Activated B cell treated with CpG ODN at 0.5 μM for 24 hours (primary cell): ENCODE measurements at regions of chr4 and their contacts with region 1.

Region 1: GRCh38 chr4:742742-743311 is 37.2 kb downstream of the PCGF3 start:
- DNase-seq: peak; percentile 73
- ATAC-seq: peak; percentile 87
- H3K4me3 Mint-ChIP-seq: no peak overlapping the region
- H3K27ac Mint-ChIP-seq: no peak overlapping the region
- H3K4me1 Mint-ChIP-seq: peaks cover 1% of the 10 kb centered on the region
- H3K27me3 Mint-ChIP-seq: no peaks in the 10 kb centered on the region
- CTCF ChIP-seq: peak; percentile 96

Region 2: DNA sequence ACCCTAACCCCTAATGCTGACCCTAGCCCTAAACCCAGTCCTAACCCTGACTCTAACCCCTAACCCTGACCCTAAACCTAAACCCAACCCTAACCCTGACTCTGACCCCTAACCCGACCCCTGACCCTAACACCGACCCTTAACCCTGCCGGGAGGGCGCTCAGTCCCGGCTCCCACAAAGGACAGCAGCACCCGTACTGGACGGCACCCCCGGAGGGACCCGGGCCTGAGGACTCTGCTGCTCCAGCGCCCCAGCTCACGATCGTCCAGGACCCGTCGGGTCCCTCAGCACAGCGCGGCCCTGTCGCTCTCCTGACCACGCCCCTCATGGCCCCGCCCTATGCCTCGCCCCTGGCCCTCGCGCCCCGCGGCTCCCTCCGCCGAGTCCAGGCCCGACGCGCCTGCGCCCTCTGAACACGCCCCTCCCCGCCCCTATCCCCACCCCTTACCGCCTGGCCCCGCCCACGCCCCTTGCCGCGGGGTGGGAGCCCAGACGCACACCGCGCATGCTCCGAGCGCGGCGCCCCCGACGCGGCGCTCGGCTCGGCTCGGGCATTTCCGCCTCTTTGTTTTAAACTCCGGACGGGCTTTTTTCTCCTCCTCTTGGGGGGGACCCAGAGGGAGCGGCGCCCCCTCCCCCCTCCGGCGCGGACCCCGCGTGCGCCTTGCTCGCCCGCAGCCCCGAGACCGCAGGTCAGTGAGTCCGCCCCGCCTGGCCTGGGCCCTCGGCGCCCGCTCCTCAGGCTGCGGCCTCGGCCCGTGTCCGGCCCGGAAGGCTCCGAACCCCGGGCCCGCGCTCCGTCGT is 37.3 kb before region 1 on chr4 and contains the start of gene PCGF3:
- CTCF ChIA-PET with region 1: no interaction called
- POLR2A ChIA-PET with region 1: no interaction called
- intact Hi-C with region 1: loop called (anchors 5 kb)
- DNase-seq: peak; percentile 95
- ATAC-seq: peak; percentile 97
- H3K4me3 Mint-ChIP-seq: peak within 1 kb of the TSS; percentile 87
- H3K27ac Mint-ChIP-seq: peak within 1 kb of the TSS; percentile 76
- H3K4me1 Mint-ChIP-seq: peaks cover 35% of the 10 kb centered on the region
- H3K27me3 Mint-ChIP-seq: no peaks in the 10 kb centered on the region
- CTCF ChIP-seq: no peak
- total RNA-seq, gene PCGF3: 51.3 and 59.2 TPM in 2 replicates

Region 3: DNA sequence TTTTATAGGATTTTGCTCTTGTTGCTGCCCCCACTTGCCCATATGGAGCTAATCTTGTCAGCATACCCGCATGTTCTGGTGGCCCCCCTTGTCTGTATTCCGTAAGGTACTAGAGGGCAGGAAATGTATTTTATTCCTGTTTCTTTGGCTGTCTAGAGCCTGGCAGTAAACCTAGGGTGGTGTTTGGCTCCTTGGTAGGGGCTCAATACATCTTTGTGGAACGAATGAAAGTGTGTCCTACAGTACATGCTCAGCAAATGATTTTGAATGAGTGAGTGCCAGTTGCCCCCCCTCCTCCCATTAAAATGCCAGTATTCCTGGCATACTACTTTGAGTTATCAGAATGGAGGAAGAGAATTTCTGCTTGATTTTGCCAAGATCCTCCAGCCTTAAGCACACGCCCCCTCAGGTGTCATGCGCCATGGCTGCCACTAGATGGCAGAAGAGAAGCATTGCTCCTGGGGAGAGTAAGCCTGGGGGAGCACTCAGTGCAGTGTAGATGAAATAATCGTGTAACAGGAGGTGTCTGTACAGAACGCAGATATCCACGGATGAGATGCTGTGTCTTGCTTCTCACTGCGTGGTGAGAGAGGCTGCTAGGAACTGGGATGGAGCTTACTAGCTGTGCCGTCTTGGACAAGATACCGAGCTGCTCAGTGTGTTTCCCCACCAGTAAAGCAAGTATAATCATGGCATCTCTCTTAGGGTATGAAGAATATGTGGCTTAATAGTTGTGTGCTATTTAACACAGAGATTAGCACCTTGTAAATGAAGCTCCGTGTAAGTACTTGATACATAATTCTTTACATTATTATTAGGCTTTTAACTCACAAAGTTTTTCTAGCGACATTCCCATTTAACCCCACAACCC is 387.7 kb after region 1 on chr4:
- CTCF ChIA-PET with region 1: interaction called, 3 read pairs
- POLR2A ChIA-PET with region 1: no interaction called
- intact Hi-C with region 1: loop called (anchors 5 kb)
- DNase-seq: peak; percentile 63
- ATAC-seq: peak; percentile 99
- H3K4me3 Mint-ChIP-seq: no peak overlapping the region
- H3K27ac Mint-ChIP-seq: peak overlapping the region; percentile 19
- H3K4me1 Mint-ChIP-seq: peaks cover 21% of the 10 kb centered on the region
- H3K27me3 Mint-ChIP-seq: peaks cover 2% of the 10 kb centered on the region
- CTCF ChIP-seq: peak; percentile 99